Left cardiac atrium (tissue), 4 donors: ENCODE measurements at regions of chr19 and their contacts with region 1.

Region 1: GRCh38 chr19:53254411-53255341 is at the start of gene ZNF677:
- DNase-seq: peak; percentile 96
- ATAC-seq: peak; percentile 100
- total RNA-seq, gene ZNF677: 22.2 to 24.2 TPM

Region 2: GRCh38 chr19:53333463-53334449 is 79.1 kb after region 1 on chr19 and contains the start of gene ZNF845:
- intact Hi-C with region 1: loop called in 1 of 2 experiments (anchors 2 kb)
- DNase-seq: peak; percentile 96
- ATAC-seq: peak; percentile 100
- total RNA-seq, gene ZNF845: 4.6 TPM

Region 3: GRCh38 chr19:53520550-53521372 is 266.1 kb after region 1 on chr19:
- intact Hi-C with region 1: loop called in 1 of 2 experiments (anchors 10 kb)
- DNase-seq: peak; percentile 98
- ATAC-seq: peak; percentile 98 to 99